Heart right ventricle (tissue), 16 donors: ENCODE measurements at regions of chr16 and their contacts with region 1.

Region 1: GRCh38 chr16:27839419-27839818 is 224.1 kb downstream of the GSG1L start:
- DNase-seq: no peak
- ATAC-seq: no peak
- H3K4me3 ChIP-seq: no peak overlapping the region
- H3K27ac ChIP-seq: no peak overlapping the region
- H3K4me1 ChIP-seq: no peaks in the 10 kb centered on the region
- H3K27me3 ChIP-seq: peaks cover 0 to 28% (median 0%) of the 10 kb centered on the region in 7 donors
- CTCF ChIP-seq: no peak

Region 2: GRCh38 chr16:27651301-27651700 is 188.1 kb before region 1 on chr16:
- intact Hi-C with region 1: no loop called
- DNase-seq: no peak
- ATAC-seq: no peak
- H3K4me3 ChIP-seq: no peak overlapping the region
- H3K27ac ChIP-seq: no peak overlapping the region
- H3K4me1 ChIP-seq: peaks cover 0 to 18% (median 0%) of the 10 kb centered on the region in 9 donors
- H3K27me3 ChIP-seq: no peaks in the 10 kb centered on the region
- CTCF ChIP-seq: no peak

Region 3: GRCh38 chr16:27737513-27737912 is 101.9 kb before region 1 on chr16:
- intact Hi-C with region 1: no loop called
- DNase-seq: no peak
- ATAC-seq: no peak
- H3K4me3 ChIP-seq: no peak overlapping the region
- H3K27ac ChIP-seq: no peak overlapping the region
- H3K4me1 ChIP-seq: no peaks in the 10 kb centered on the region
- H3K27me3 ChIP-seq: no peaks in the 10 kb centered on the region
- CTCF ChIP-seq: no peak

Region 4: DNA sequence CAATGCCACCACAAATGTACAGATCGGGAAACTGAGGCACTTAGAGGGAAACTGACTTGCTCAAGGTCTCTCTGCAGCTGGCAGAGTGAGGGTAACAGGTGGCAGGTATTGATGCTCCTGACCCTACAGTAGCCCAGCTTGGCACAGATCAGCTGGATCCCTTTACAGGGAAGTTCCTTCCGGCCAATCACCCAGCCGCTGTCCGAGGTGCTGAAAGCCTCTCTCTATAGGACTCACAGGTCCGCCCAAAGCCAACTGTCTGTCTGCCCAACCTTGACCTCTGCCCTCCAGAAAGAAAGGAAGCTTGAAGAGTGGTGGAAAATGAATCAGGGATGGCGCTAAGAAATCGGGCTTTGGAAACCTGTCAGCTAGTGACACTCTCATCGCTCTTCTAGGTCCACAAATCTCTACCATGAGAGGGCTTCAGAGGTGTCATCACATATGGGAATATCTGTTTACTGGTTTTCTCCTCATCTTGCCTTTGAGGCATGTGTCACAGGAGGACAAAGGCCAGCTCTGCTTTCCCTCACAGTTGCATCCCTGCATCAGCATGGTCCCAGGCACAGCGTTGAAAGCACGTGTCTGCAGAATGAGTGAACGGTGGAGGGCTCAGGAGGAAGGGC is 43.3 kb before region 1 on chr16:
- intact Hi-C with region 1: no loop called
- DNase-seq: peak; percentile 42 to 44
- ATAC-seq: no peak
- H3K4me3 ChIP-seq: no peak overlapping the region
- H3K27ac ChIP-seq: no peak overlapping the region
- H3K4me1 ChIP-seq: no peaks in the 10 kb centered on the region
- H3K27me3 ChIP-seq: peaks cover 0 to 2% (median 0%) of the 10 kb centered on the region in 7 donors
- CTCF ChIP-seq: no peak

Region 5: GRCh38 chr16:27879601-27880247 is 40.3 kb after region 1 on chr16:
- intact Hi-C with region 1: loop called in 1 of 10 experiments (anchors 10 kb)
- DNase-seq: peak; percentile 16 to 45
- ATAC-seq: peak in 7 of 8 donors; percentile 47 to 83 (median 74)
- H3K4me3 ChIP-seq: no peak overlapping the region
- H3K27ac ChIP-seq: no peak overlapping the region
- H3K4me1 ChIP-seq: peaks cover 0 to 6% (median 0%) of the 10 kb centered on the region in 9 donors
- H3K27me3 ChIP-seq: peaks cover 0 to 9% (median 0%) of the 10 kb centered on the region in 7 donors
- CTCF ChIP-seq: no peak

Region 6: GRCh38 chr16:28003923-28004322 is 164.5 kb after region 1 on chr16:
- intact Hi-C with region 1: no loop called
- DNase-seq: no peak
- ATAC-seq: peak in 3 of 8 donors; percentile 28 to 57 (median 37)
- H3K4me3 ChIP-seq: no peak overlapping the region
- H3K27ac ChIP-seq: no peak overlapping the region
- H3K4me1 ChIP-seq: peaks cover 0 to 6% (median 0%) of the 10 kb centered on the region in 9 donors
- H3K27me3 ChIP-seq: peaks cover 0 to 20% (median 0%) of the 10 kb centered on the region in 7 donors
- CTCF ChIP-seq: no peak